GM12878 (cell line): ENCODE measurements at regions of chr21 and their contacts with region 1.

Region 1: GRCh38 chr21:14686466-14687267 is 140.6 kb upstream of the SAMSN1 start:
- DNase-seq: peak; percentile 86
- ATAC-seq: peak; percentile 70
- H3K4me3 ChIP-seq: peak overlapping the region; percentile 26; the same call in 1 of the 2 replicates
- H3K27ac ChIP-seq: peak overlapping the region; percentile 88
- H3K4me1 ChIP-seq: peaks cover 57% of the 10 kb centered on the region
- H3K27me3 ChIP-seq: no peaks in the 10 kb centered on the region
- CTCF ChIP-seq: no peak
- EP300 ChIP-seq: peak; percentile 33 to 50; a peak in 2 of 4 replicates
- POLR2A ChIP-seq: no peak
- RAD21 ChIP-seq: no peak; the same call in 1 of the 2 replicates

Region 2: DNA sequence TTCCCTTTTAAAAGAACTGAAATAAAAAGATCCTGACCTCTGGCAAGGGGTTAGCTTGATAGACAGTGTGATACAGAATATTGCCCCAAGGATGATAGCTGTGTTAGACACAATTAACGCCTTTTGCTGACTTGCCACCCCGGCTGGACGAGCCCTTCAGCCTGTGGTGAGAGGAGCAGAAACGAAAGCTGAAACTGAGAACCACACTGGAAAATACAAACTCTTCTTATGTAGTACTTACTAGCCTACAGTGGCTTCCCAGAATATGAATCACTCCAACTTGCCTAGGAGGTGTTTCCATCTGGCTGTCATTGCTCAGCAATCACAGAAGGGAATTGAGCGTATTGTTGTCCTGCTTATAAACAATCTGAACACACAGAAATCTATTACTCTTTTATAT is 163.4 kb before region 1 on chr21:
- CTCF ChIA-PET with region 1: interaction called, 5 read pairs
- POLR2A ChIA-PET with region 1: no interaction called
- RAD21 ChIA-PET with region 1: interaction called, 20 read pairs
- SMC1A ChIA-PET with region 1: interaction called, 13 read pairs
- in situ Hi-C with region 1: no loop called
- intact Hi-C with region 1: no loop called
- DNase-seq: no peak
- ATAC-seq: peak; percentile 87
- H3K4me3 ChIP-seq: peak overlapping the region; percentile 29; the same call in 1 of the 2 replicates
- H3K27ac ChIP-seq: peak overlapping the region; percentile 50
- H3K4me1 ChIP-seq: peaks cover 32% of the 10 kb centered on the region
- H3K27me3 ChIP-seq: no peaks in the 10 kb centered on the region
- CTCF ChIP-seq: no peak
- EP300 ChIP-seq: no peak; a peak in 1 of 4 replicates
- POLR2A ChIP-seq: no peak
- RAD21 ChIP-seq: no peak

Region 3: DNA sequence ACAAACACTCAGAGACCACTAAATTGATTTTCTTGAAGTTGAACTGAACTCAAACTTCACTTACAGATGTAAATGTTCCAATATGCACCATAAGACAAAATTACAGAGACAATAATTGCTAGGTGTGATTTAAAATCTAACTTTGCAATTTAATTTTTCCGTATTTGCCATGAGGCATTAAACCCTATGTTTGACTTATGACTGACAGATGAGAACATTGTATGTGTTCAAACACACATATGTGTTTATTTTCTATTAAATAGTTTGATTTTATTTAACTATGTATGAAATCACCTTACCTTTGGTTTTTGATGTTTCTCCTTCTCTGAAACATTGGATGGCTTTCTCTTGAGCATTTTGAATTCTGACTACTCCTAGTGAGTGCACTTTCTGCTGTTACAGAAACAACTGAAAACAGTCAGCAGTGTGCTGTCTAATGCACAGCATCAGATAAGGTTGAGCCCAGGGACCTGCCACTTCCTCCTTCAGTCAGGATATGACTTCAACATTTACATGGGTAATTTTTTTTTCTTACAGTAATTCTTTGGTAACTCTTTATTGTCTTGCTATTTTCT is 140.7 kb before region 1 on chr21 and contains the start of gene SAMSN1:
- CTCF ChIA-PET with region 1: no interaction called
- POLR2A ChIA-PET with region 1: interaction called, 3 read pairs
- RAD21 ChIA-PET with region 1: interaction called, 23 read pairs
- SMC1A ChIA-PET with region 1: interaction called, 12 read pairs
- in situ Hi-C with region 1: no loop called
- intact Hi-C with region 1: loop called (anchors 2 kb)
- DNase-seq: peak; percentile 78
- ATAC-seq: peak; percentile 86
- H3K4me3 ChIP-seq: peak within 1 kb of the TSS; percentile 76
- H3K27ac ChIP-seq: peak within 1 kb of the TSS; percentile 87
- H3K4me1 ChIP-seq: peaks cover 12% of the 10 kb centered on the region; the same call in 1 of the 2 replicates
- H3K27me3 ChIP-seq: no peaks in the 10 kb centered on the region
- CTCF ChIP-seq: no peak
- EP300 ChIP-seq: peak in 1 of 2 experiments; percentile 66; a peak in 1 of 4 replicates
- POLR2A ChIP-seq: peak; percentile 83
- RAD21 ChIP-seq: 0 out of 2 replicates have a peak, but pooled peaks have one; percentile 22
- polyA plus RNA-seq, gene SAMSN1: 90.4 to 102 TPM

Region 4: GRCh38 chr21:14591882-14592281 is 94.8 kb before region 1 on chr21:
- CTCF ChIA-PET with region 1: interaction called, 4 read pairs
- POLR2A ChIA-PET with region 1: interaction called, 4 read pairs
- RAD21 ChIA-PET with region 1: interaction called, 27 read pairs
- SMC1A ChIA-PET with region 1: interaction called, 17 read pairs
- in situ Hi-C with region 1: no loop called
- intact Hi-C with region 1: loop called (anchors 1 kb)
- DNase-seq: no peak
- ATAC-seq: peak; percentile 79
- H3K4me3 ChIP-seq: no peak overlapping the region
- H3K27ac ChIP-seq: no peak overlapping the region
- H3K4me1 ChIP-seq: peaks cover 9% of the 10 kb centered on the region; the same call in 1 of the 2 replicates
- H3K27me3 ChIP-seq: no peaks in the 10 kb centered on the region
- CTCF ChIP-seq: no peak
- EP300 ChIP-seq: peak in 1 of 2 experiments; percentile 16; a peak in 2 of 4 replicates
- POLR2A ChIP-seq: no peak
- RAD21 ChIP-seq: no peak

Region 5: DNA sequence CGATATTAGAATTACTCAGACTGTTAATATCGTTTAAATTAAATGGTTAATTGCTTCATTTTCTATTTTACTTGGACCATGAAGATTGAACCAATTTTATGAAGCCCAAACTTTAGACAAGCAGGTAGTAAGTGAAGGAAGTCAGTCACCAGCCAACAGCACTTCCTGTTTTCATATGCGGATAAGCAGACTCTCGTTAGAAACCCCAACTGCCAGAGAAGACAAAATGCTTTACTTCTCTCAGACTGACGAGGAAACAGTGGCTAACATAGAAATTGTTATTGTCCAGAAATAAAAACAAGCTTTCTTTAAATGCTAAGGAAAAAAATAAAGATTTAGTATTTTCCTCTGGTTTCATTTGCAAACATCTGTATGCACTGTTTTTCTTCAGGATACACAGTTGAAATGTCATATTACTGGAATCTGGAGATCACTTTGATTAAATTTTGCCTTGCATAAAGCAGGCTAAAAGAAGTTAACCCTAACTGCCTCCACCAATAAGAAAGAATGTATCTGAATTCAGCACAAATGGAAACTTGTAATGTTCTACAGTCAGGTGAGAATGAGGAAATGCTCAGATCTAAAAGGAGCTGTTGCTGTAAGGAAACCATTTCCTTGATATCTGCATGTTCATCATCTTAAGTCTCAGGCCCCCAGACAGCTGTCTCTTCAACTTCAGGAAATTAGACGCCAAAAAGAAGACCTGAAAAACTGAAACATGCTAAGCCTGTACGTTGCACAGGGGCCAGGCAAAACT is 10.7 kb before region 1 on chr21:
- CTCF ChIA-PET with region 1: interaction called, 4 read pairs
- POLR2A ChIA-PET with region 1: interaction called, 6 read pairs
- RAD21 ChIA-PET with region 1: interaction called, 5 read pairs
- SMC1A ChIA-PET with region 1: interaction called, 33 read pairs
- in situ Hi-C with region 1: no loop called
- intact Hi-C with region 1: no loop called
- DNase-seq: peak; percentile 48
- ATAC-seq: peak; percentile 84
- H3K4me3 ChIP-seq: peak overlapping the region; percentile 48; the same call in 1 of the 2 replicates
- H3K27ac ChIP-seq: peak overlapping the region; percentile 79
- H3K4me1 ChIP-seq: peaks cover 26% of the 10 kb centered on the region
- H3K27me3 ChIP-seq: no peaks in the 10 kb centered on the region
- CTCF ChIP-seq: no peak
- EP300 ChIP-seq: 0 out of 4 replicates have a peak, but pooled peaks of 1 of the 2 experiments have one; percentile 25
- POLR2A ChIP-seq: no peak
- RAD21 ChIP-seq: no peak

Region 6: DNA sequence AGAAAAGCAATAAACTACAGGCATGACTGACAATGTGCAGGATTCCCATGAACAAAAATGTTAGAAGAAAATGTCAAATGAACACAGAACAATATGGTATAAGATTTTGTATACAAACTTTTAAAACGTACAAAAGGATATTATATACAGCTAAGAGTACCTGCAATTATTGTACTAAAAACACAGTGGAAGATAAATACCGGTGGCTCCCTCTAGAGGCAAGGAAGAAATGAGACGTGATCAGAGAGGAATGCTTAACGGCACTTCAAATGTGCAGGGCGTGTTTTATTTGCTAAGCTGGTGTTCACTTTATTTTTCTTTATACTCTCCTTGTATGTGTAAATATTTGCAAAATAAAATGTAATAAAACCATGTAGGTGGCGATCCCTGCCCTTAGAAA is 51.3 kb after region 1 on chr21:
- CTCF ChIA-PET with region 1: interaction called, 29 read pairs
- POLR2A ChIA-PET with region 1: interaction called, 3 read pairs
- RAD21 ChIA-PET with region 1: interaction called, 91 read pairs
- SMC1A ChIA-PET with region 1: interaction called, 84 read pairs
- in situ Hi-C with region 1: no loop called
- intact Hi-C with region 1: loop called (anchors 1 kb)
- DNase-seq: no peak
- ATAC-seq: peak; percentile 81
- H3K4me3 ChIP-seq: no peak overlapping the region
- H3K27ac ChIP-seq: peak overlapping the region; percentile 20; the same call in 1 of the 2 replicates
- H3K4me1 ChIP-seq: peaks cover 23% of the 10 kb centered on the region
- H3K27me3 ChIP-seq: no peaks in the 10 kb centered on the region
- CTCF ChIP-seq: peak; percentile 51 to 65 (median 61)
- EP300 ChIP-seq: no peak
- POLR2A ChIP-seq: no peak
- RAD21 ChIP-seq: peak; percentile 86

Region 7: GRCh38 chr21:14825514-14825974 is 138.9 kb after region 1 on chr21:
- CTCF ChIA-PET with region 1: no interaction called
- POLR2A ChIA-PET with region 1: no interaction called
- RAD21 ChIA-PET with region 1: no interaction called
- SMC1A ChIA-PET with region 1: no interaction called
- in situ Hi-C with region 1: no loop called
- intact Hi-C with region 1: loop called (anchors 10 kb)
- DNase-seq: peak; percentile 34
- ATAC-seq: peak; percentile 86
- H3K4me3 ChIP-seq: no peak overlapping the region
- H3K27ac ChIP-seq: peak overlapping the region; percentile 79
- H3K4me1 ChIP-seq: peaks cover 9% of the 10 kb centered on the region; the same call in 1 of the 2 replicates
- H3K27me3 ChIP-seq: no peaks in the 10 kb centered on the region
- CTCF ChIP-seq: no peak
- EP300 ChIP-seq: peak; percentile 15 to 37; a peak in 1 of 4 replicates
- POLR2A ChIP-seq: no peak
- RAD21 ChIP-seq: no peak